Head of caudate nucleus (tissue), 42 donors: ENCODE measurements at regions of chr7 and their contacts with region 1.

Region 1: GRCh38 chr7:143416565-143417149 is 8.0 kb upstream of the EPHA1 start:
- DNase-seq: peak in 6 of 42 donors; percentile 21 to 51 (median 34)

Region 2: GRCh38 chr7:143321734-143322133 is 94.9 kb before region 1 on chr7:
- intact Hi-C with region 1: loop called (anchors 10 kb)
- DNase-seq: peak in 26 of 42 donors; percentile 13 to 73 (median 31)

Region 3: GRCh38 chr7:143380255-143380645 is 36.4 kb before region 1 on chr7:
- intact Hi-C with region 1: no loop called
- DNase-seq: peak; percentile 72 to 95 (median 88)